Mammary epithelial cell (primary cell): ENCODE measurements at regions of chr7 and their contacts with region 1.

Region 1: DNA sequence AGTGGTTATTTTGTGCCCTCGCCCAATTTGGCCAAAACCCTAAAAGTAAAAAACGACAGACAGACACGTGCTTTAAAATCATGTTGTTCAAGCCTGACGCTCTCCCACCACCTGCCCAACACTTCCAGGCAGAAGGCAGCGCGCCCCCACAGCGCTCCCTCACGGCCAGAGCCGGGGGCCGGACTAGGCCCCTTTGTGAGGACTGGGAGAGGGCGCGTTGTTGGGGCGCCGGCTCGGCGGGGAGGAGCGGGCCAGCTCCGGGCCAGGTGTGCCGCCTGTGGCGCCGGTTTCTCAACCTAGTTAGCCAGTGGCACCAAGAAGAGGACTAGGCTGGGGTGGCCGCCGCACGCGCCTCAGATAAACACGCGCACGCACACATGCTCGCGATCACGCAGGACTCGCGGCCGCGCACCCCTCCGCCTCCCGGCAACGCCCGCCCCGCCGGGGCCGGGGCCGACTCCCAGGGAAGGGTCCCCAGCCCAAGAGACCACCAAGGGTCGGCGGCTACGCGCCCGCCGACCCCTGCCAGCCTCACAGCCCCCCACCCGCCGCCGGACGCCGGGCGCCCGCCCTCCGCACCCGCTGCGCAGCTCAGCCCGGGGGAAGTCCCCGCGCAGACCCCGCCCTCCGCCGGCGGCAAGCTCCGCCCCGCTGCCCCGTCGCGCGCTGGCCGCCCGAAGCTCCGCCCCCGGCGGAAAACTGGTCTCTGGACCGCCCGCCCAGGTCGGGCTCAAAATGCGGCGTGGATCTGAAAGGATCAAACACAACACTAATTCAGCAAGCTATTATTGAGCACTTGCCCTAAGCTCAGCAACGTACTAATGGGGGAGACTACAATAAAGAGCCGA is at the start of gene IMMP2L:
- DNase-seq: peak; percentile 88
- H3K4me3 ChIP-seq: peak within 1 kb of the TSS; percentile 59 to 74 (median 72)
- H3K27ac ChIP-seq: peak within 1 kb of the TSS; percentile 69
- H3K4me1 ChIP-seq: peaks cover 18% of the 10 kb centered on the region
- H3K27me3 ChIP-seq: no peaks in the 10 kb centered on the region
- CTCF ChIP-seq: peak in 1 of 2 donors; percentile 38
- total RNA-seq, gene IMMP2L: 10.8 to 19.9 TPM

Region 2: GRCh38 chr7:111089822-111090426 is 472.2 kb before region 1 on chr7:
- CTCF ChIA-PET with region 1: no interaction called
- dilution Hi-C with region 1: no loop called
- in situ Hi-C with region 1: no loop called
- intact Hi-C with region 1: loop called (anchors 5 kb)
- DNase-seq: peak; percentile 24
- H3K4me3 ChIP-seq: no peak overlapping the region
- H3K27ac ChIP-seq: no peak overlapping the region
- H3K4me1 ChIP-seq: no peaks in the 10 kb centered on the region
- H3K27me3 ChIP-seq: no peaks in the 10 kb centered on the region
- CTCF ChIP-seq: peak; percentile 71 to 76

Region 3: DNA sequence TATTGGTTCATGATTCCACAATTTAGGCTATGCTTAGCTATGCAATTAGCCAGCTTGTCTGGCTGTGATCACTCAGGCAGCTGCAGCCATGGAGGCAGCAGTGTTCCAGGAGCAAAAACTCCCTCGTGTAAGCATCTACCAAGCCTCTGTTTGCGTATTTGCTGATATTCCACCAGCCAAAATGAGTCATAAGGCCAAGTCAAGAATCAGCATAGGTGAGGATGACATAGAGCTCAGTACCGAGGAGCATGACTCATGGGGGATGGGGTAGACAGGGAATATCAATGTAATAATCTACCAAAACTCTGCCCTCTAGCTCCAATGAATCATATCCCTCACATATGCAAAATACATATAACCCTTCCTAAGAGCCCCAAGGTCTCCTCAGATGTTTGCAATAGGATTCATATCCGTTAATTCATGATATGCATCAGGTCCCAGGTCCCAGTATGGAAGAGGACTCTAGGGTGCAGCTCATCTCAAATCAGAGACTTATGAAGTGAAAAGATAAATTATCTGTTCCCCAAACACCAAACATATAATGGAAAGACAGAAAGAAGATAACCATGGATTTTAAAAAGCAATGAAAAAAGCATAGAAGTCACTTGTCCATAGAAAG is 63.0 kb before region 1 on chr7:
- CTCF ChIA-PET with region 1: no interaction called
- dilution Hi-C with region 1: no loop called
- in situ Hi-C with region 1: no loop called
- intact Hi-C with region 1: loop called (anchors 5 kb)
- DNase-seq: peak; percentile 98
- H3K4me3 ChIP-seq: no peak overlapping the region
- H3K27ac ChIP-seq: peak overlapping the region; percentile 61
- H3K4me1 ChIP-seq: peaks cover 12% of the 10 kb centered on the region
- H3K27me3 ChIP-seq: no peaks in the 10 kb centered on the region
- CTCF ChIP-seq: no peak

Region 4: DNA sequence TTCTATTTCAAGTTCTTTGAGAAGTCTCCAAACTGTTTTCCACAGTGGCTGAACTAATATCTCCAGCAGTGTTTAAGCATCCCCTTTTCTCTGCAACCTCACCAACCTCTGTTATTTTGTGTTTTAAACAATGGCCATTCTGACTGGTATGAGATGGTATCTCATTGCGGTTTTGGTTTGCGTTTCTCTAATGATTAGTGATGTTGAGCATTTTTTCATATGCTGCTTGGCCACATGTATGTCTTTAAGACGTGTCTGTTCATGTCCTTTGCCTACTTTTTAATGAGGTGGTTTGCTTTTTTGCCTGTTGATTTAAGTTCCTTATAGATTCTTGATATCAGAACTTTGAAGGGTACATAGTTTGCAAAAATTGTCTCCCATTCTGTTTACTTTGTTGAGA is 156.8 kb after region 1 on chr7:
- CTCF ChIA-PET with region 1: no interaction called
- dilution Hi-C with region 1: no loop called
- in situ Hi-C with region 1: no loop called
- intact Hi-C with region 1: loop called (anchors 5 kb)
- DNase-seq: peak; percentile 88
- H3K4me3 ChIP-seq: no peak overlapping the region
- H3K27ac ChIP-seq: no peak overlapping the region
- H3K4me1 ChIP-seq: peaks cover 8% of the 10 kb centered on the region
- H3K27me3 ChIP-seq: no peaks in the 10 kb centered on the region
- CTCF ChIP-seq: no peak

Region 5: GRCh38 chr7:111730476-111731300 is 168.6 kb after region 1 on chr7:
- CTCF ChIA-PET with region 1: interaction called, 5 read pairs
- dilution Hi-C with region 1: no loop called
- in situ Hi-C with region 1: no loop called
- intact Hi-C with region 1: loop called (anchors 2 kb)
- DNase-seq: peak; percentile 21
- H3K4me3 ChIP-seq: no peak overlapping the region
- H3K27ac ChIP-seq: no peak overlapping the region
- H3K4me1 ChIP-seq: no peaks in the 10 kb centered on the region
- H3K27me3 ChIP-seq: no peaks in the 10 kb centered on the region
- CTCF ChIP-seq: peak; percentile 71 to 75